Tibial artery (tissue), 4 donors: ENCODE measurements at regions of chr20 and their contacts with region 1.

Region 1: GRCh38 chr20:9359561-9360308 is 154.7 kb upstream of the LAMP5 start:
- DNase-seq: peak in 1 of 2 donors; percentile 40
- H3K4me3 ChIP-seq: no peak overlapping the region
- H3K27ac ChIP-seq: peak overlapping the region in 1 of 2 donors; percentile 32
- H3K4me1 ChIP-seq: peaks cover 0 to 43% (median 13%) of the 10 kb centered on the region in 4 donors
- H3K27me3 ChIP-seq: no peaks in the 10 kb centered on the region
- CTCF ChIP-seq: peak; percentile 43 to 49

Region 2: DNA sequence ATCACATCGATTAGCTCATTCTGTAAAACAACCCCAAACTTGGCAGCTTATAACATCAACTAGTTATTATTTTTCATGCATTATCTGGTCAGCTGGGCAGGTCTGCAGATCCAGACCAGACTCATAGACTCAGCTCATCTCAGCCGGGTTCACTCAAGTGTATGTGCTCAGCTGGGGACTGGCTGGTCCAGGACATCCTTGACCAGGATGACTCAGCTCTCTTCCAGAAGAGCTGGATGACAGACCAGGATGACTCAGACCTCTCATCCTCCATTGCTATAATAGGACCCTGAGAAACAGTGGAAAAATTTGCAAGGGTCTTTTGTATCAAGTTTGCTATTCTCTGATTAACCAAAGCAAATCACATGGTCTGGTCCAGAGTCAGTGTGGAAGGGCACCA is 603.3 kb before region 1 on chr20:
- intact Hi-C with region 1: loop called (anchors 5 kb)
- DNase-seq: no peak
- H3K4me3 ChIP-seq: no peak overlapping the region
- H3K27ac ChIP-seq: no peak overlapping the region
- H3K4me1 ChIP-seq: no peaks in the 10 kb centered on the region
- H3K27me3 ChIP-seq: no peaks in the 10 kb centered on the region
- CTCF ChIP-seq: no peak

Region 3: GRCh38 chr20:8790442-8791074 is 569.2 kb before region 1 on chr20:
- intact Hi-C with region 1: loop called (anchors 10 kb)
- DNase-seq: no peak
- H3K4me3 ChIP-seq: no peak overlapping the region
- H3K27ac ChIP-seq: no peak overlapping the region
- H3K4me1 ChIP-seq: peaks cover 0 to 4% (median 0%) of the 10 kb centered on the region in 4 donors
- H3K27me3 ChIP-seq: no peaks in the 10 kb centered on the region
- CTCF ChIP-seq: peak; percentile 89 to 92

Region 4: GRCh38 chr20:8853805-8854338 is 505.9 kb before region 1 on chr20:
- intact Hi-C with region 1: loop called (anchors 10 kb)
- DNase-seq: no peak
- H3K4me3 ChIP-seq: peak overlapping the region in 1 of 2 donors; percentile 24
- H3K27ac ChIP-seq: peak overlapping the region; percentile 52 to 66
- H3K4me1 ChIP-seq: peaks cover 0 to 43% (median 14%) of the 10 kb centered on the region in 4 donors
- H3K27me3 ChIP-seq: no peaks in the 10 kb centered on the region
- CTCF ChIP-seq: peak; percentile 87 to 94